Breast epithelium (tissue), 4 donors: ENCODE measurements at regions of chr9 and their contacts with region 1.

Region 1: DNA sequence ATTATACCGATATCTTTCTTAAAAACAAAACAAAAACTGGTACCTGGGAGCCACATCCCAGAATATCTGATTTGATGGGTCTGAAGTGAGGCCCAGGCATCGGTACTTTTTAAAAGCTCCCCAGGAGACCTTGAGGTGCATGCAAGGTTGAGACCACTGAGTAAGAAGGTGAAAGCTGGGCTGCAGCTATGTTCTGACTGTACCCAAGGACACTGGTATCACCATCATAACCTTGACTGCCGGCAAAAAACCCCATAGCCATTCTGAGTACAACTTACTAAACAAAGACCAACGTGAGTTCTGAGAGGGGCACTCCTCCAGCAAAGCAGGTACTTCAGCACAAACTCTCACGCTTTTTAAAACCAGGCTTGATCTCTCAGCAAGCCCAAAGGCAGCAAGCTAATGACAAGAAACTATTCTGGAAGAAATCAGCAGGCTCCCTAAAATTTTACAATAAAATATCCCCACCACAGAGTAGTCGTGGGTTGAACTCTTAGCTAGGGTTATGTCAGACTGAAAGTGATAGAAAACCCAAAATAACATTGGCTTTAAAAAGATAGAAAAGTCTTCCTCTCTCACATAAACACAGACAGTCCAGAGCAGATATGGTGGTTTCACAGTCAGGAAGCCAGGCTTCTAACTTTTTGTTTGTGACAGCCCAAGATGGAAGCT is 263.9 kb downstream of the SAXO1 start:
- DNase-seq: no peak
- H3K4me3 ChIP-seq: no peak overlapping the region
- H3K27ac ChIP-seq: no peak overlapping the region
- H3K4me1 ChIP-seq: no peaks in the 10 kb centered on the region
- H3K27me3 ChIP-seq: no peaks in the 10 kb centered on the region
- CTCF ChIP-seq: no peak
- POLR2A ChIP-seq: no peak

Region 2: GRCh38 chr9:18857769-18858168 is 88.7 kb after region 1 on chr9:
- intact Hi-C with region 1: loop called (anchors 5 kb)
- DNase-seq: no peak
- H3K4me3 ChIP-seq: no peak overlapping the region
- H3K27ac ChIP-seq: no peak overlapping the region
- H3K4me1 ChIP-seq: no peaks in the 10 kb centered on the region
- H3K27me3 ChIP-seq: no peaks in the 10 kb centered on the region
- CTCF ChIP-seq: no peak
- POLR2A ChIP-seq: no peak